PC-3 (cell line): ENCODE measurements at regions of chr5 and their contacts with region 1.

Region 1: DNA sequence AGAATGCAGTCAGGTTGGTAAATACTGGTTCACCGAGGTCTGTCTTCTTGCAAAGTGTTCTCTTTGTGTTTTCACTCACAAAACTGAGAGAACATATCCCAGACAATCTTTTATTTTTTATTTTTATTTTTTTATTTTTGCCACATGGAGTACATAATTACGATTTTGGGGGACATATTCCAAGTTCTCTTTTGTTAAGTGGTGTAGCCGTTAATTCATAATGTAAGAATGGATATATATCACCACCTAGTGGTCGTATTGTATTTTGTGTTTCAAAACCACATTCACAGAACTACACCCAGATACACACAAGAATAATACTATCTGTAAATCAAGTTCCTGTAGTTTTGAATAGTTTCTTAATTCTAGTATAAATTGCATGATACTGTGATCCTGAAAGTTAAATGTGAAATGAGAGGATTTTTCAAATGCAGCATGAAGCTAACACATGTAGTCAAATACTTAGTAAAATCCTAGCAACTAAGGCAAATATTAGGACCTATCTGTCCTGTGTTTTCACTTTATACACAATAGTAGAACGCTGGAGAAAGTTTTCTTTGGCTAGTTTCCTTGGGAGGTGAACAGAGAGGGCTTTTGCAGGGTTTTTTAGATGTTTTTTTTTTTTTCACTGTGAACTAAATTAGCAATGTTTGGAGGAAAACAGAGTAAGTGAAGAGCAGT is 92.7 kb downstream of the VCAN start:
- DNase-seq: peak; percentile 70
- ATAC-seq: peak; percentile 63
- H3K4me3 ChIP-seq: peak overlapping the region; percentile 38; the same call in 1 of the 2 replicates
- H3K27ac ChIP-seq: peak overlapping the region; percentile 61
- H3K4me1 ChIP-seq: peaks cover 35% of the 10 kb centered on the region
- H3K27me3 ChIP-seq: no peaks in the 10 kb centered on the region
- CTCF ChIP-seq: peak; percentile 75

Region 2: DNA sequence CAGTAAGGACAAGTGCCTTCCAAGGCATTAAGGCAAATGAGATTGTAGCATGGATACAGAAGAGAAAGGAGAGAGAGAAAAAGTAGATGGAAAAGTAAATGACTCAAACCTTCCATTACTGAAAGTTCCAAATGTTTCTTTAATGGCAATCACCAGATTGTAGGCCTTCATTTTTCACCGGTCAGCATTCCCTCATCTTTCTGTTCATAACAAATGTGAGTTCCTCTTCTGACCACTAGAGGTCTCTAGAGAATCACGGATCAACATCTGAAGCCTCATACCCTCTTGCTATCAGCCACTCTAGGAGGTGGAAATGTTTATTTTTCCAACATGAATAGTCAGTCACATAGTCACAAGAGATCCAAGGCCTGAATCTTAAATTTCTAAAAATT is 1212.5 kb before region 1 on chr5:
- CTCF ChIA-PET with region 1: no interaction called
- POLR2A ChIA-PET with region 1: no interaction called
- intact Hi-C with region 1: loop called (anchors 1 kb)
- DNase-seq: peak; percentile 85
- ATAC-seq: peak; percentile 81
- H3K4me3 ChIP-seq: no peak overlapping the region
- H3K27ac ChIP-seq: peak overlapping the region; percentile 90
- H3K4me1 ChIP-seq: peaks cover 17% of the 10 kb centered on the region
- H3K27me3 ChIP-seq: no peaks in the 10 kb centered on the region
- CTCF ChIP-seq: peak; percentile 89

Region 3: DNA sequence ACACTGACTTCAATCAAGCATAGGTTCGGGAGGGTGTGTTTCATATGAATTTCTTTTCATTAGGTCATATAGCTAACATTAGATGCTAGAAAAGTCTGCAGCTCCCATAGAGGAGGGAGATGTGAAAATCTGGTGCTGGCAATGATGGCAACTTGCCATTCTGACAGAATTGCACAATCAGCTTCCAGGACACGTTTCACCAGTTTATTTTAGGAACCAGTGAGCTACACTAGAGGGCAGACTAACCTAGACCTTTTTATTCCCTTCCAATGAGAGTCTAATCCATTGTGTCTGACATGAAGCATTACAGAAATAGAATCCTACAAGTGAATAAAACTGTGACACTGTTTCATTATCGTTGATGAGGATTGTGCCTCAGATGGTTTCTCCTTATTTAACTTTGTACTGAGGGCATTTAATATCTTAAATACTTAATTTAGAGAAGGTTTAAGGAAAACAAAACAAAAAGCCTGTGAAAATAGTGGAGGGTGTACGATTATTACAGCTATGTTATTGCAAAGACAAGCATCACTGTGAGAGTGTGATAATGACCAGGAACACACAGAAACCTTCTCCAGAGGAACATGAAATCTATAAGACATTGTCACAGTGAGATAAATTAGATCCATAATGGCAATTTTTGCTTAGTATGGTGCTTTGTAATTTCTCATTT is 922.7 kb before region 1 on chr5:
- CTCF ChIA-PET with region 1: no interaction called
- POLR2A ChIA-PET with region 1: no interaction called
- intact Hi-C with region 1: loop called (anchors 2 kb)
- DNase-seq: peak; percentile 89
- ATAC-seq: peak; percentile 88
- H3K4me3 ChIP-seq: no peak overlapping the region
- H3K27ac ChIP-seq: 0 out of 2 replicates have a peak overlapping the region, but pooled peaks have one; percentile 10
- H3K4me1 ChIP-seq: peaks cover 22% of the 10 kb centered on the region
- H3K27me3 ChIP-seq: no peaks in the 10 kb centered on the region
- CTCF ChIP-seq: peak; percentile 76

Region 4: DNA sequence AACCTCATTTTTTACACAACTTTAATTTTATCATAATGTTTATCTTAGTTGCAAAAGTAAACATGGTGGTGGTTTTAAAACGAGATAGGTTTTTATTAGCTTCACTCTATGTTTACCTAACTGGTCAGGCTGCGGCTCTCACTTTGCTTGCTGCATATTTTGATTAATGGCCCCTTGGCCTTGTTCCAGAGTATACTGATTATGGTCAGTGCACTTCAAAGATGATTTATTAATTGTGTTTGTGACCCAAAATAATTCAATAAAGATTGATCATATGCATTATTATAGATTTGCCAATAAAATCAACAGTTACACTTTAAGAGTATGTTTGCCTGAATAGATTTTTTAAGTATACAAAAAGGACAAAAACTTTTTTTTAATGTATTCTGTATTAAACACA is 298.9 kb before region 1 on chr5:
- CTCF ChIA-PET with region 1: no interaction called
- POLR2A ChIA-PET with region 1: no interaction called
- intact Hi-C with region 1: loop called (anchors 5 kb)
- DNase-seq: peak; percentile 88
- ATAC-seq: peak; percentile 99
- H3K4me3 ChIP-seq: no peak overlapping the region
- H3K27ac ChIP-seq: no peak overlapping the region
- H3K4me1 ChIP-seq: peaks cover 11% of the 10 kb centered on the region; the same call in 1 of the 2 replicates
- H3K27me3 ChIP-seq: peaks cover 13% of the 10 kb centered on the region
- CTCF ChIP-seq: no peak

Region 5: GRCh38 chr5:83517072-83517687 is 47.0 kb before region 1 on chr5:
- CTCF ChIA-PET with region 1: no interaction called
- POLR2A ChIA-PET with region 1: no interaction called
- intact Hi-C with region 1: loop called (anchors 1 kb)
- DNase-seq: peak; percentile 60
- ATAC-seq: peak; percentile 76
- H3K4me3 ChIP-seq: no peak overlapping the region
- H3K27ac ChIP-seq: peak overlapping the region; percentile 62
- H3K4me1 ChIP-seq: peaks cover 25% of the 10 kb centered on the region
- H3K27me3 ChIP-seq: no peaks in the 10 kb centered on the region
- CTCF ChIP-seq: peak; percentile 30; the same call in 1 of the 2 replicates

Region 6: GRCh38 chr5:83553000-83553486 is 11.2 kb before region 1 on chr5:
- CTCF ChIA-PET with region 1: no interaction called
- POLR2A ChIA-PET with region 1: no interaction called
- intact Hi-C with region 1: no loop called
- DNase-seq: no peak
- ATAC-seq: no peak
- H3K4me3 ChIP-seq: no peak overlapping the region
- H3K27ac ChIP-seq: no peak overlapping the region
- H3K4me1 ChIP-seq: peaks cover 20% of the 10 kb centered on the region
- H3K27me3 ChIP-seq: no peaks in the 10 kb centered on the region
- CTCF ChIP-seq: no peak

Region 7: GRCh38 chr5:83653669-83654068 is 89.5 kb after region 1 on chr5:
- CTCF ChIA-PET with region 1: no interaction called
- POLR2A ChIA-PET with region 1: no interaction called
- intact Hi-C with region 1: no loop called
- DNase-seq: no peak
- ATAC-seq: no peak
- H3K4me3 ChIP-seq: no peak overlapping the region
- H3K27ac ChIP-seq: no peak overlapping the region
- H3K4me1 ChIP-seq: no peaks in the 10 kb centered on the region
- H3K27me3 ChIP-seq: no peaks in the 10 kb centered on the region
- CTCF ChIP-seq: no peak